ENCODE measurements at regions of chr5 and their contacts with region 1.

Region 1: GRCh38 chr5:160333721-160334120 is 21.4 kb upstream of the CCNJL start:
- DNase-seq: peak; percentile 87 to 98 (median 98)
- H3K4me3 ChIP-seq: peak overlapping the region in 1 of 3 experiments; percentile 13
- H3K4me3 Mint-ChIP-seq: peak overlapping the region in 1 of 2 donors; percentile 52
- H3K27ac ChIP-seq: peak overlapping the region; percentile 58 to 65
- H3K27ac Mint-ChIP-seq: peak overlapping the region in 6 of 7 donors; percentile 83 to 94 (median 87)
- H3K4me1 ChIP-seq: peaks cover 29 to 37% of the 10 kb centered on the region in 2 donors
- H3K4me1 Mint-ChIP-seq: peaks cover 20% of the 10 kb centered on the region
- H3K27me3 ChIP-seq: no peaks in the 10 kb centered on the region
- H3K27me3 Mint-ChIP-seq: peaks cover 4 to 12% (median 5%) of the 10 kb centered on the region in 3 donors
- CTCF ChIP-seq: no peak

Region 2: DNA sequence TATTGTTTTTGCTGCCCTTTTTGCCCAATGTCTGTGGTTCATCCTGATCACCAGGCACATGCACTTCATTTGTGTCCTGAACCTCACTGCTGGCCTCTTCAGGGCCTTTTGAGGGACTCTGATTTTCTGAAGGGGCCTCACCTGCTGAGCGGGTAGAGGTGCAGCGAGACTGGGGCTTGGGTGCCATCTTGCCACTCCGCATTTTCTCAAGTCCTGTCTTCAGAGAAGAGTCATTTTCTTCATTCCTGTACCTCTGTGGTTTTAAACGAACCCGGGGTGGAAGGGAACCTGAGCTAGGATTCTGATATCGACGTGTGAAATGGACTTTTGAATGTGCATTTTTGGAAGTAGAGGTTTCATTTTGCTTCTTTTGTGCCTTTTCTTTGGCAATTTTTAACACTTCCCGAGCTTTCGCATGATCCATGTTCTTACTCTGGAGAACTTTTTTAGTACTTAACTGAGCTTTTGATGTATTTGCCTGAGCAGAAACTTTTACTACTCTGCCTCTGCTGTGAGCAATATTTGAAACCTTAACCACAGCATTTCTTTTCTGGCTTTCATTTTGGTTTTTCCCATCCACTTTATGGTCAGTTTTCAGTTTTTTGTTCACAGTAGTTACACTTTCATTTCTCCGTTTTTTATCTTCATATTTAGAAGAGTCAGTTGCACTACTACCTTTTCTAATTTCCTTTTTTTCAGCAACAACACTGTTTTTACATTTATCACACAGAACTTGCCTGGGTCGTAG is 240.6 kb before region 1 on chr5:
- intact Hi-C with region 1: loop called in 1 of 2 experiments (anchors 10 kb)
- DNase-seq: no peak
- H3K4me3 ChIP-seq: no peak overlapping the region
- H3K4me3 Mint-ChIP-seq: no peak overlapping the region
- H3K27ac ChIP-seq: peak overlapping the region; percentile 27 to 76
- H3K27ac Mint-ChIP-seq: peak overlapping the region in 6 of 7 donors; percentile 32 to 91 (median 74)
- H3K4me1 ChIP-seq: peaks cover 55 to 82% of the 10 kb centered on the region in 2 donors
- H3K4me1 Mint-ChIP-seq: peaks cover 82% of the 10 kb centered on the region
- H3K27me3 ChIP-seq: no peaks in the 10 kb centered on the region
- H3K27me3 Mint-ChIP-seq: no peaks in the 10 kb centered on the region
- CTCF ChIP-seq: no peak